Ascending aorta (tissue), 2 donors: ENCODE measurements at regions of chr13 and their contacts with region 1.

Region 1: DNA sequence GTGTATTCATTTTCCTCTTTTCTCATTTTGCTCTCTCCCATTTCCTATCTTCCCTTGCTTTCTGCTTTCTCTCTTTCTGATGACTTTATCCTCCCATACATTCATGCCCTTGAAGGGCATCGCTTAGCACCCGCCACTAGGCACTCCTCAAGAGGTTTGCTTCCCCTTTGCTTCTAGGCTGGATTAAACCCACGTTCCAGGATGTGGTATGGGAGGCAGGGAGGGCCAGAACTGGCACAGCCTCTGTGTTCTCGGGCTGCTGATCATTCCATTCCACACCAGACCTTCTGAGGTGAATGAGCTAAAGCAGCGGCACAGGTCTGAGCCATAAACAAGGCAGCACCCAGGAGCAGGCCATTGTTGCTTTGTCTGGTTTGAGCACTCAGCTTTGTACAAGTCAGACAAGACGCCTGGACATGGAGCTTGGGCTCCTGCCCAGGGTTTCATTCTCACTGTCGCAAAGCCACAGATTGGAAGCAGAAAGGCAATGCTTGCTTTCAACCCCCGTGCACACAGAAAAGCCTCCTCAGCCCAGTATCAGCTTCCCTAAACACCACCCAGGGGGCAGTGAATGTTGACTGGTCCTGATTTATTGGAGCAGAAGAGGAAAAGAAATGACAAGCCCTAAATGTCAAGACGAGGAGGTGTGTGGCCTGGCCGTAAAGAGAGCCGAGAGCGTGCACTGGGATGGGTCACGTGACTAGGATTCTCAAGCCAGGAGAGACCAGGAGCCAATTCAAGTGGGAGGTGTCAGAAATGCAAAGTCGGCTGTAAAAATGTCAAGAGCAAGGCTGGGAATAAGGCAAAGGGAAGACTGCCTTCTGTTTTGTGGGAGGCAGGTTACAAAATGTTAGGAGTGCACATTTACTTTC is 218.0 kb upstream of the SERP2 start:
- DNase-seq: peak in 1 of 2 donors; percentile 82
- H3K4me3 ChIP-seq: peak overlapping the region in 1 of 2 donors; percentile 39
- H3K27ac ChIP-seq: peak overlapping the region; percentile 79
- H3K4me1 ChIP-seq: peaks cover 5 to 50% of the 10 kb centered on the region in 2 donors
- H3K27me3 ChIP-seq: no peaks in the 10 kb centered on the region
- CTCF ChIP-seq: no peak

Region 2: GRCh38 chr13:44224450-44225149 is 68.9 kb after region 1 on chr13:
- intact Hi-C with region 1: loop called (anchors 2 kb)
- DNase-seq: peak in 1 of 2 donors; percentile 87
- H3K4me3 ChIP-seq: no peak overlapping the region
- H3K27ac ChIP-seq: peak overlapping the region; percentile 85 to 93
- H3K4me1 ChIP-seq: peaks cover 9 to 38% of the 10 kb centered on the region in 2 donors
- H3K27me3 ChIP-seq: no peaks in the 10 kb centered on the region
- CTCF ChIP-seq: no peak